ENCODE measurements at regions of chr16 and their contacts with region 1.

Region 1: DNA sequence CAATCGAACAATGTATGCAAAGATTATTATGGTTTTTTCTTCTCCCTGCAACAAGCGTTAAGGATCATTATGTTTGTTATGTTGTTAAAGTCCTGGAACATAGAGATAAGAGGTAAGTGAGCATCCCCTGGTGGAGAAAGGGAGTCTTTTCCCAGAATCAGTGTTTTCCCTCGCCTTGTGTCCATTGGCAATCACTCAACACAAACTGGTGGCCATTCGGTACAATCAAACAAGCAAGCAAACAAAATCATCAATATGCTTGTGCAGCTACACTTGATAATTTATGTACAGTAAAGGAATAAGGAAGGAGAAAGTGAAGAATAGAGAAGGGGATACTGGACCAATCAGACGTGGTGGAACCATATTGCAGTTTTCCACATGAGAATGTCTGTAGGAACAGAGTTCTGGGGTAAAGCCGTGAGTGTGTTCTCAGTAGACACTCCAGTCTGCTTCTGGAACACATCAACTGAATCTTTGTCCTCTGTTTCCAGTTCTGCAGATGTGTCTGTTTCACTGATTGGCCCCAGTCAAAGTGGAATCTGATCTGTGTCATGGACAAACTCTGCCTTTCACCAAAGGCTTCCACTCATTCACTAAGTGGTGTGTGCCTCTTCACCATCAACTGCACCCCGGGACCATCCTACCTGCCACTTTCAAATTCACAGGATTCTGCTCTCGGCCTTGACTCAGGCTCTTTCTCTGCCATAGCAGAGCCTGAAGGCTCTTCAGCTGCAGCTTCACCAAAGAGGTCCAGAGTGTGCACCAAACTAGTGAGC is 169.5 kb downstream of the AHSP start:
- DNase-seq: peak; percentile 41
- ATAC-seq: no peak
- H3K4me3 ChIP-seq: no peak overlapping the region
- H3K27ac ChIP-seq: no peak overlapping the region
- H3K4me1 ChIP-seq: peaks cover 6% of the 10 kb centered on the region; the same call in 1 of the 2 replicates
- H3K27me3 ChIP-seq: no peaks in the 10 kb centered on the region
- CTCF ChIP-seq: peak; percentile 87

Region 2: DNA sequence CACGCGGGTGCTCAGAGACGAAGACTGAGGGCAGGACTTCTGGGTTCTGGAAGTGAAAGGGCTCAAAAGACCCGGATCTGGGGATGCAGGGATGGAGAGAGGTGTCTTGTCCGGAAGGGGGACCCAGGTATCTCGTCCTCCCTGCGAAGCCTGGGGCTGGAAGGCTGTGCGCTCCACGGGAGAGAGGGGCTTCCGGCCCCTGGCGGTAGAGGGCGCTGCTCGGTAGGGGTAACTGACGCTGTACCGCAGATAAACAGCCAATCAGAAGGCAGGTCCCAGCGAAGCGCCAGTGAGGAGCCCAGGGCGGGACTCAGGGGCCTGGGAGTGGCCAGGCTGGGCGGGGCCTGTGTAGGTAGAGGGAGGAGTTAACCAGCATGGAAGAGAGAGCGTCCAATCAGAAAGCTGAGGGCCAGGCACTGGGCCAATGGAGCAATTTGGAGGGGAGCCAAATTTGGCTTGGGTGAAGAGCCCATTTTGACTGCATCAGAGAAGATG is 224.4 kb before region 1 on chr16:
- CTCF ChIA-PET with region 1: no interaction called
- POLR2A ChIA-PET with region 1: no interaction called
- in situ Hi-C with region 1: no loop called
- intact Hi-C with region 1: loop called (anchors 5 kb)
- DNase-seq: peak; percentile 60
- ATAC-seq: peak; percentile 74
- H3K4me3 ChIP-seq: peak overlapping the region; percentile 63 to 79
- H3K27ac ChIP-seq: peak overlapping the region; percentile 81
- H3K4me1 ChIP-seq: peaks cover 6% of the 10 kb centered on the region; the same call in 1 of the 2 replicates
- H3K27me3 ChIP-seq: no peaks in the 10 kb centered on the region
- CTCF ChIP-seq: peak; percentile 86

Region 3: DNA sequence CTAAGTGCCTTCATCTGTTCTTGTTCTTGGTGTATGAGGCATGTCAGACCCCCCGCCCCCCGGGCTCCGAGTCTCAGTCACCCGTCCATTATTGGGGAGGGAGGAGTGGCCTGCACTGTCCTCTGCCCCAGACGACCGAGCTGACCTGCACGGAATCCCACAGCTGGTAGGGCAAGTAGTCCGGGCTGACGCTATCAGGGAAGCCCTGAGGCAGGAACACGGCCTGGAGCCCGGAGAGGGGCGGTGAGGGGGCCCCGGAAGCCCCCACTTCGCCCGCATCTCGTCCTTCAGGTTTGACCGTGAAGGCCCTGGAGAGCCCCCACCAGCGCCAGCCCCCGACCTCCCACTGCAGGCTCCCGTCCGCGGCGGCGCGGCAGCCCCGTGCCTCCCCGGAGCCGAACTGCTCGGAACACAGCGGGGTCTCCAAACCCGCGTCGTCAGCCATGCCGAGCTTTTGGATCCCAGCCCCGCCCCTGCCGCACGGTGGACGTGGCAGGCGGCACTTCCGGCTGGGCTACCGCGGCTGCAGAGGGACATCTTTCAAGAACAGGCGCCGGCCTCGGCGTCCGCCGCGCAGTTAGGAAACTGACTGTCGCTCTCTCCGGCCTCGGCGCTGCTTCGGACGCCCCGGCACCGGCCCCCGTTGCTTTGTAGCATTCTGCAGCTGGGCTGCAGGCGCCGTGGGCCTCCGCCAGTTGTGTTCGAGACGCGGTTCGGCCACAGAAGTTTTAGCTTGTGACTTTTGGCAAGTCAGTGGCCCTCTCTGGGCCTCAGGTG is 189.0 kb before region 1 on chr16 and contains the start of gene RUSF1:
- CTCF ChIA-PET with region 1: no interaction called
- POLR2A ChIA-PET with region 1: no interaction called
- in situ Hi-C with region 1: no loop called
- intact Hi-C with region 1: loop called (anchors 5 kb)
- DNase-seq: no peak
- ATAC-seq: peak; percentile 97
- H3K4me3 ChIP-seq: peak within 1 kb of the TSS; percentile 91 to 97
- H3K27ac ChIP-seq: peak within 1 kb of the TSS; percentile 97
- H3K4me1 ChIP-seq: peaks cover 15% of the 10 kb centered on the region
- H3K27me3 ChIP-seq: no peaks in the 10 kb centered on the region
- CTCF ChIP-seq: no peak
- total RNA-seq, gene RUSF1: 47.4 TPM

Region 4: GRCh38 chr16:31727553-31727952 is 30.4 kb after region 1 on chr16:
- CTCF ChIA-PET with region 1: no interaction called
- POLR2A ChIA-PET with region 1: no interaction called
- in situ Hi-C with region 1: no loop called
- intact Hi-C with region 1: no loop called
- DNase-seq: no peak
- ATAC-seq: no peak
- H3K4me3 ChIP-seq: no peak overlapping the region
- H3K27ac ChIP-seq: no peak overlapping the region
- H3K4me1 ChIP-seq: no peaks in the 10 kb centered on the region
- H3K27me3 ChIP-seq: no peaks in the 10 kb centered on the region
- CTCF ChIP-seq: no peak